HEK293 (cell line): ENCODE measurements at regions of chr20 and their contacts with region 1.

Region 1: GRCh38 chr20:1503564-1504227 is 12.5 kb upstream of the SIRPB2 start:
- H3K4me3 ChIP-seq: no peak overlapping the region
- H3K27ac ChIP-seq: no peak overlapping the region
- H3K4me1 ChIP-seq: no peaks in the 10 kb centered on the region
- CTCF ChIP-seq: peak; percentile 92

Region 2: GRCh38 chr20:1437235-1437904 is 66.3 kb before region 1 on chr20:
- CTCF ChIA-PET with region 1: interaction called, 15 read pairs
- POLR2A ChIA-PET with region 1: no interaction called
- H3K4me3 ChIP-seq: no peak overlapping the region
- H3K27ac ChIP-seq: no peak overlapping the region
- H3K4me1 ChIP-seq: no peaks in the 10 kb centered on the region
- CTCF ChIP-seq: peak; percentile 88

Region 3: DNA sequence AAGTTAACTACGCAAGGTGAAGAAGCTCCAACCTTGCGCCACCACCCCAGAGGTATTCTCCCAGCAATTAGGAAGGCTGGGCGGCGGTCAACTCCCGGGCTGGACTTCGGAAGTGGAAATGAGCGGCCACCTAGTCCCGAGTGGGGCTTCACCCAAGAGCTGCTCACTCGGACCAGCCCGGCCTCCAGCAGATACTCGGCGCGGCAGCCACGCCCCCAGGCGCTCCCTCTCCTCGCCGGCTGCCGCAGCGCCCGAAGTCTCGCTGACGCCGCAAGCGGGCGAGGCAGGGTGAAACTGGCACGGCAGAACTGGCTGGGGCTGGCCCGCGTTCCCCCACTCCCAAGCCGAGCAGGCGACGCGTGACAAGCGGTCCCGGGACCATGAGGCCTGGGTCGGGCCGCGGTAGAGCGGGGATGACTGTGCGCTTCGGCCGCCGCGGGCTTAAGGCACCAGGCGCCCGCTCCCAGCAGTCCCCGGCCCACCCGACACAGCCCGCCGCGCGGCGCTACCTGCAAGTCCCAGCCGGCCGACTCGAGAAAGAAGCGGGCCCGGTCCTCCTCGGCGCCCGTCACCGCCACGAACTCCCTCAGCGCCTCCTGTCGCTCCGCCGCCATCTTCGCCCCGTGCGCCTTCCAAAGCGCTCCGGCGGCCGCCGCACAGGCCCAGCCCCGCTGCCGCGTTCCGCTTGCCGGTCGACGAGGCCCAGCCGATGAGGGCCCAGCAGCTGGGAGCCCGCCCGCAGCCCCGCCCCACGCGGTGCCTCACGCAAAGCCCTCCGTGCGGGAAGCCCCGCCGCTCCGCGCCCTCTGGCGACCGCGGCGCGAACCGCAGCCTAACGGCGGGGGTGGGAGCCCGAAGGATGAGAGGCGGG is 37.2 kb before region 1 on chr20 and contains the start of gene NSFL1C:
- CTCF ChIA-PET with region 1: interaction called, 60 read pairs
- POLR2A ChIA-PET with region 1: no interaction called
- H3K4me3 ChIP-seq: peak within 1 kb of the TSS; percentile 87
- H3K27ac ChIP-seq: peak within 1 kb of the TSS; percentile 89
- H3K4me1 ChIP-seq: peaks cover 8% of the 10 kb centered on the region
- CTCF ChIP-seq: peak; percentile 63

Region 4: DNA sequence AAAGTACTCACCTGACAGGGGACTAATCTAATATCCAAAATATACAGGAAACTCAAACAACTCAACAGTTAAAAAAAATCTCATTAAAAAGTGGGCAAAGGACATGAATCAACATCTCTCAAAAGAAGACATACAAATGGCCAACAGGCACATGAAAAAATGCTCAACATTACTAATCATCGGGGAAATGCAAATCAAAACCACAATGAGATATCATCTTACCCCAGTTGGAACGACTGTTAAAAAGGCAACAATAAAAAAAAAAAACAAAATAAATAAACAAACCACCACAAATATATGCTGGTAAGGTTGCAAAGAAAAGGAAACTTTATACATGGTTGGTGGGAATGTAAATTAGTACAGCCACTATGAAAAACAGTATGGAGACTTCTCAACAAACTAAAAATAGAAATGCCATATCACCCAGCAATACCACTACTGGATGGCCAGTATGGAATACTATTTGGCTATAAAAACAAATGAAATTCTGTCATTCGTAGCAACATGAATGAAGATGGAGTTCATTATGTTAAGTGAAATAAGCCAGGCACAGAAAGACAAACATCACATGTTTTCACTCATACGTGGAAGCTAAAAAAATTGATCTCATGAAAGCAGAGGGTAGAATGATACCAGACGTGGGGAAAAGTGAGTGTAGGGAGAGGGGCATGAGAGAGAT is 19.1 kb before region 1 on chr20:
- CTCF ChIA-PET with region 1: interaction called, 26 read pairs
- POLR2A ChIA-PET with region 1: no interaction called
- H3K4me3 ChIP-seq: no peak overlapping the region
- H3K27ac ChIP-seq: no peak overlapping the region
- H3K4me1 ChIP-seq: peaks cover 13% of the 10 kb centered on the region
- CTCF ChIP-seq: no peak

Region 5: DNA sequence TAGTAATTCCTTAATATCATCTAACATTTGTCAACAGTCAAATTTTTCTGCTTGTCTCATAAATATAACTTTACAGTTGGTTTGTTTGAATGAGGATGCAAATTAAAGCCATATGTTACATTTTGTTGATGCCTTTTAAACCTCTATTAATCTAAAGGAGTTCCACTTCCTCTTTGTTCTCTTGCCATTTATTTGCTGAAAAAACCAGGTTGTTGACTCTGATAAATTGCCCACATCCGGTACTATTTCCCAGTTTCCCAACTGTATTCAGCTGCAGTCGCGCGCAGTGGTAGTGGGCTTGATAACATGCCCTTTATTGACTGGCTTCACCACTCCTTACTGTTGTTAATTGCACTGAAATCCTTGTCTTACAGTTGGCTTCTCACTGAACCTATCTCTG is 20.3 kb after region 1 on chr20:
- CTCF ChIA-PET with region 1: interaction called, 21 read pairs
- POLR2A ChIA-PET with region 1: no interaction called
- H3K4me3 ChIP-seq: no peak overlapping the region
- H3K27ac ChIP-seq: no peak overlapping the region
- H3K4me1 ChIP-seq: no peaks in the 10 kb centered on the region
- CTCF ChIP-seq: no peak

Region 6: GRCh38 chr20:1685304-1686052 is 181.8 kb after region 1 on chr20:
- CTCF ChIA-PET with region 1: no interaction called
- POLR2A ChIA-PET with region 1: no interaction called
- H3K4me3 ChIP-seq: no peak overlapping the region
- H3K27ac ChIP-seq: no peak overlapping the region
- H3K4me1 ChIP-seq: no peaks in the 10 kb centered on the region
- CTCF ChIP-seq: no peak